ENCODE measurements at regions of chr19 and their contacts with region 1.

Region 1: GRCh38 chr19:53103198-53103944 is at the start of gene ZNF160:
- DNase-seq: peak; percentile 100
- ATAC-seq: peak; percentile 96
- H3K4me3 Mint-ChIP-seq: peak within 1 kb of the TSS; percentile 87
- H3K27ac Mint-ChIP-seq: peak within 1 kb of the TSS; percentile 91
- H3K4me1 Mint-ChIP-seq: peaks cover 18% of the 10 kb centered on the region
- H3K27me3 Mint-ChIP-seq: no peaks in the 10 kb centered on the region
- total RNA-seq, gene ZNF160: 42.2 to 53.0 TPM

Region 2: DNA sequence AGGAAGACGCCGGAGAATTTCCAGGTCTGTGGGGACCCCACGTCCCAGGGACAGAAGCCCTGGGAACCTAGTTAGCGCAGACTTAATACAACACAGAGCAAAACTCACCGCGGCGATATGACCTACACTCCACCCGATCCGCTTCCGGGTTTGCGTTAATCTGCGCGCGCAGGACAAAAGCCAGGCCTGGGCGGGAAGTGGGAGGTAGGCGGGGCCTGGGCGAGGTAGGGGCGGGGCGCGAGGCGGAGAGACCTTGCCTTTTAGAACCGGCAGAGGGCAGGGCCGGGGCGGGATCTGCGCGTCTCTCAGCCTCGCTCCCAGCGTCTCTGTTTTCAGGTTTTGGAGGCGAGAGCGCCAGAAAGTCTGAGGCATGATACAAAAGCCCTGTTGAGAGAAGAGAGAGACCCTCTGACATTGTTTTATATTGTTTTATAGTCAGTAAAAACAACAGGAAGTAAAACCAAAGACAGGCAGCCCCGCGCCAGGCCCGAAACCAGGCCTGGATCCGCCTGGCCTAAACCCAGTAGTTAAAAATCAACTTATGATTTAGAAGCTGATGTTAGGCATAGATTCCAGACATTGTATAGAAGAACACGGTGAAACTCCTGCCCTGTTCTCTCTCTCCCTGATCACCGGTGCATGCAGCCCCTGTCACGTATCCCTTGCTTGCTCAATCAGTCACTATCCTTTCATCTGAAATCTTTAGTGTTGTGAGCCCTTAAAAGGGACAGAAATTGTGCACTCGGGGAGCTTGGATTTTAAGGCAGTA is 368.3 kb before region 1 on chr19 and contains the start of gene ZNF611:
- CTCF ChIA-PET with region 1: no interaction called
- POLR2A ChIA-PET with region 1: no interaction called
- intact Hi-C with region 1: loop called in 1 of 2 experiments (anchors 1 kb)
- DNase-seq: peak; percentile 100
- ATAC-seq: peak; percentile 97
- H3K4me3 Mint-ChIP-seq: peak within 1 kb of the TSS; percentile 88
- H3K27ac Mint-ChIP-seq: peak within 1 kb of the TSS; percentile 89
- H3K4me1 Mint-ChIP-seq: peaks cover 24% of the 10 kb centered on the region
- H3K27me3 Mint-ChIP-seq: no peaks in the 10 kb centered on the region
- total RNA-seq, gene ZNF611: 20.6 to 22.9 TPM

Region 3: GRCh38 chr19:52962394-52963246 is 140.8 kb before region 1 on chr19 and contains the start of gene ZNF816:
- CTCF ChIA-PET with region 1: no interaction called
- POLR2A ChIA-PET with region 1: no interaction called
- intact Hi-C with region 1: loop called (anchors 1 to 2 kb)
- DNase-seq: peak; percentile 100
- ATAC-seq: peak; percentile 100
- H3K4me3 Mint-ChIP-seq: peak within 1 kb of the TSS; percentile 96
- H3K27ac Mint-ChIP-seq: peak within 1 kb of the TSS; percentile 96
- H3K4me1 Mint-ChIP-seq: peaks cover 26% of the 10 kb centered on the region
- H3K27me3 Mint-ChIP-seq: no peaks in the 10 kb centered on the region
- total RNA-seq, gene ZNF816: 10.7 to 11.4 TPM

Region 4: GRCh38 chr19:53037101-53038097 is 66.0 kb before region 1 on chr19:
- CTCF ChIA-PET with region 1: no interaction called
- POLR2A ChIA-PET with region 1: no interaction called
- intact Hi-C with region 1: no loop called
- DNase-seq: peak; percentile 52
- ATAC-seq: no peak
- H3K4me3 Mint-ChIP-seq: peak overlapping the region; percentile 14
- H3K27ac Mint-ChIP-seq: no peak overlapping the region
- H3K4me1 Mint-ChIP-seq: peaks cover 4% of the 10 kb centered on the region
- H3K27me3 Mint-ChIP-seq: peaks cover 14% of the 10 kb centered on the region

Region 5: DNA sequence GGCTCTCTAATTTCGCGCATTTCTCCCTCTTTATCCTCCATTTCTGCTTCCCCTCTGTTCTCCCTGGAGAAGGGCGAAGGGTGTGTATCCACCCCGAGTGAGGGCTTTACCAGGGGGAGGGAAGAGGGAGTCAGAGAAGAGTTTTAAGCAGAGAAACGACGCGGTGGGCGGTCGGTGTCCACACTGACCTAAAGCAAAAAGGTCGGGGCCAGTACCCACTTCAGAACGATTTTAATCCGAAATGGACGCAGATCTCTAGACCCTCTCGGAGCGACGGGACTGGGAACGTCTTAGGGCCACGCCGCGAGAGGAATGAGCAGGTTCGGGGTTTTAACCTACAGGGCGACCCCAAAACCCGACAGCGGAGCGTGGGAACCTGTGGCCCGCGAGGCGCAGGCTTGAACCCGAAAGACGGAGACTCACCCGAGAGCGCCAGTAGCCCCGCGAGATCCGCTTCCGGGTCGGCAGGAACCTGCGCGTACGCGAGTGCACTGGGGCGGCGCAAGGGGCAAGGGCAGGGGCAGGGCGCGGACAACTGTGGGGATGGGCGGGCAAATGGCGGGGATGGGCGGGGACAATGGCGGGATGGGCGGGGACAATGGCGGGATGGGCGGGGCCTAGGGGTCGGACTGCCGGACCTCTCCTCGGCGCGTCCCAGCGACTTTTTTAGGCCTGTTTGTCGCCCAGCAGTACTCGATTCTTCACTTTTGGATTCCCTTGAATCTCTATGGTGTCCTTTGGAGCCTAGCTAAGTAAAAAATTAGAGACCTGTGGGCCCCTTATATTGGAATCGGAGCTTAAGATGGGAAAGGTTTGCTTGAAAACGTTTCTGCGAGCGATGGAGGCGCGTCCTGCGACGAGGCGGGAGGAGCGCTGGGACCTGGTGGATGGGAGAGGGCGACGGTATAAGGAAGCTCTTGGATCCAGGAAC is 151.3 kb after region 1 on chr19 and contains the start of gene ZNF677:
- CTCF ChIA-PET with region 1: no interaction called
- POLR2A ChIA-PET with region 1: no interaction called
- intact Hi-C with region 1: loop called in 1 of 2 experiments (anchors 1 kb)
- DNase-seq: peak; percentile 92
- ATAC-seq: peak; percentile 100
- H3K4me3 Mint-ChIP-seq: peak within 1 kb of the TSS; percentile 84
- H3K27ac Mint-ChIP-seq: peak within 1 kb of the TSS; percentile 53
- H3K4me1 Mint-ChIP-seq: peaks cover 10% of the 10 kb centered on the region
- H3K27me3 Mint-ChIP-seq: no peaks in the 10 kb centered on the region
- total RNA-seq, gene ZNF677: 6.4 to 7.5 TPM

Region 6: GRCh38 chr19:53431399-53432087 is 328.2 kb after region 1 on chr19 and contains the start of gene ZNF761:
- CTCF ChIA-PET with region 1: no interaction called
- POLR2A ChIA-PET with region 1: no interaction called
- intact Hi-C with region 1: loop called in 1 of 2 experiments (anchors 1 kb)
- DNase-seq: peak; percentile 98
- ATAC-seq: peak; percentile 99
- H3K4me3 Mint-ChIP-seq: peak within 1 kb of the TSS; percentile 94
- H3K27ac Mint-ChIP-seq: peak within 1 kb of the TSS; percentile 83
- H3K4me1 Mint-ChIP-seq: peaks cover 26% of the 10 kb centered on the region
- H3K27me3 Mint-ChIP-seq: no peaks in the 10 kb centered on the region
- total RNA-seq, gene ZNF761: 10.5 to 11.4 TPM

Region 7: GRCh38 chr19:54189735-54190502 is 1086.5 kb after region 1 on chr19:
- CTCF ChIA-PET with region 1: no interaction called
- POLR2A ChIA-PET with region 1: no interaction called
- intact Hi-C with region 1: loop called in 1 of 2 experiments (anchors 10 kb)
- DNase-seq: peak; percentile 100
- ATAC-seq: peak; percentile 69
- H3K4me3 Mint-ChIP-seq: peak overlapping the region; percentile 76
- H3K27ac Mint-ChIP-seq: peak overlapping the region; percentile 96
- H3K4me1 Mint-ChIP-seq: peaks cover 34% of the 10 kb centered on the region
- H3K27me3 Mint-ChIP-seq: no peaks in the 10 kb centered on the region

Measured in activated CD4-positive, alpha-beta T cell treated with anti-CD3 and anti-CD28 coated beads for 36 hours (primary cell).